ENCODE measurements at regions of chr19 and their contacts with region 1.

Region 1: GRCh38 chr19:45103156-45103507 is 10.2 kb downstream of the PPP1R37 start:
- DNase-seq: no peak
- H3K4me3 ChIP-seq: no peak overlapping the region
- H3K27ac ChIP-seq: no peak overlapping the region
- H3K4me1 ChIP-seq: peaks cover 14% of the 10 kb centered on the region
- CTCF ChIP-seq: no peak

Region 2: DNA sequence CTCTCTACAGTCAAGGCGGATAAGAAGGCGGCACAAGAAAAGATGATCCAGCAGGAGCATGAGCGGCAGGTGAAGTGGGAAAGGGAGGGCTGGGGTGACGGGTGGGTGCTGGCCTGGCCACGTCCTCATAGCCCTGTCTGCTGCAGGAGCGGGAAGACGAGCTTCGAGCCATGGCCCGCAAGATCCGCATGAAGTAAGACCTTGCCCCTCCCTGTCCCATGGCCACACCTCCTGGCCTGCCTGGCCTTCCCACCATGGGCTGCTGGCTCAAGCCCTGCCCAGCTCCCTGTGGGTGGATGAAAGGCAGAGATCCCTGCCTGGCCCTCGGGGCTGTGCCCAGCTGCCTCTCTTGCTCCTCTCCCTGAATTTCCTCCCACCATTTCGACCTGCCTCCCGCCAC is 34.1 kb before region 1 on chr19:
- CTCF ChIA-PET with region 1: no interaction called
- POLR2A ChIA-PET with region 1: no interaction called
- intact Hi-C with region 1: no loop called
- DNase-seq: no peak
- H3K4me3 ChIP-seq: no peak overlapping the region
- H3K27ac ChIP-seq: peak overlapping the region; percentile 9
- H3K4me1 ChIP-seq: peaks cover 39% of the 10 kb centered on the region
- CTCF ChIP-seq: no peak

Region 3: GRCh38 chr19:45323671-45324081 is 220.5 kb after region 1 on chr19:
- CTCF ChIA-PET with region 1: no interaction called
- POLR2A ChIA-PET with region 1: interaction called, 10 read pairs
- intact Hi-C with region 1: no loop called
- DNase-seq: no peak
- H3K4me3 ChIP-seq: no peak overlapping the region
- H3K27ac ChIP-seq: no peak overlapping the region
- H3K4me1 ChIP-seq: peaks cover 10% of the 10 kb centered on the region
- CTCF ChIP-seq: no peak